Thyroid gland (tissue), 4 donors: ENCODE measurements at regions of chr22 and their contacts with region 1.

Region 1: GRCh38 chr22:28009272-28009827 is 90.3 kb upstream of the PITPNB start:
- DNase-seq: peak; percentile 78
- H3K4me3 ChIP-seq: no peak overlapping the region
- H3K27ac ChIP-seq: no peak overlapping the region
- H3K4me1 ChIP-seq: peaks cover 0 to 3% of the 10 kb centered on the region in 2 donors
- H3K27me3 ChIP-seq: no peaks in the 10 kb centered on the region
- CTCF ChIP-seq: peak; percentile 83 to 96 (median 92)
- POLR2A ChIP-seq: no peak

Region 2: GRCh38 chr22:26756675-26757293 is 1252.6 kb before region 1 on chr22:
- intact Hi-C with region 1: loop called (anchors 10 kb)
- DNase-seq: peak; percentile 29 to 43
- H3K4me3 ChIP-seq: no peak overlapping the region
- H3K27ac ChIP-seq: no peak overlapping the region
- H3K4me1 ChIP-seq: peaks cover 0 to under 1% of the 10 kb centered on the region in 2 donors
- H3K27me3 ChIP-seq: no peaks in the 10 kb centered on the region
- CTCF ChIP-seq: peak; percentile 51 to 96 (median 84)
- POLR2A ChIP-seq: no peak

Region 3: GRCh38 chr22:27780161-27780575 is 229.2 kb before region 1 on chr22:
- intact Hi-C with region 1: no loop called
- DNase-seq: no peak
- H3K4me3 ChIP-seq: no peak overlapping the region
- H3K27ac ChIP-seq: peak overlapping the region in 1 of 3 donors; percentile 57
- H3K4me1 ChIP-seq: peaks cover 0 to 4% of the 10 kb centered on the region in 2 donors
- H3K27me3 ChIP-seq: no peaks in the 10 kb centered on the region
- CTCF ChIP-seq: no peak
- POLR2A ChIP-seq: no peak

Region 4: DNA sequence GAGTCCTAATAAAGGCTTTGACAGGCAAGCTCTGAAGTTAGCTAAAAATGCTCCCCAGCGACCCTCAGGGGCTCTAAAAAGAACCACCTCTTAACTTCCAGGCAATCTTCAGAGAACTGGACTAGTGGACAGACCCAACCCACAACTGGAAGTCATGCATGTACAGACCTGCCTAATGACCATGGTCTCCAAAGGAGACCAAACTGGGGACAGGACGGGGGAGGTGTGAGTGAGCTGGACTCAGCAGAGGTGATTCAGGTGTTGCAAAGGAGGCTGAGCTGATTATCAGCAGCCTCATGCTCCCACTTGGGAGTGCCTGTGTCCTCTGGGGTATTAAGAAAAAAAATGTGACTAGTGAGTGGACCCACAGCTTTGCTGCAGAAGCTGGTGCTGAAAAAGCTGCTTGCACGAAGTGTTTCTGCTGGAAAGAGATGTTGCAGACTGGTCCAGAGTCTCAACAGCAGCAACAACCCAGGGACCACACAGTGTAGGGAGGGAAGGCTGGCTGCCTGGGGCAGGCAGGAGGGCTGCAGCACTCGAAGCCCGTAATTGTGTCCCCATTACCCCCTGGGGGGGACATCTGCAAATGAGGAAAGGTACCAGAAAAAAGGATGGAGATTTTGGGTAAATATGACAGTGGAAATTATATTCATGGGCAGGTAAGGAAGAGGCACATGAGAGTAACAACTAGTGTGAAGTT is 125.5 kb before region 1 on chr22:
- intact Hi-C with region 1: loop called (anchors 2 kb)
- DNase-seq: no peak
- H3K4me3 ChIP-seq: no peak overlapping the region
- H3K27ac ChIP-seq: no peak overlapping the region
- H3K4me1 ChIP-seq: peaks cover 14 to 18% of the 10 kb centered on the region in 2 donors
- H3K27me3 ChIP-seq: no peaks in the 10 kb centered on the region
- CTCF ChIP-seq: no peak
- POLR2A ChIP-seq: no peak